ENCODE measurements at regions of chr9 and their contacts with region 1.

Region 1: GRCh38 chr9:34237836-34238235 is 59.0 kb downstream of the UBAP1 start:
- DNase-seq: no peak
- H3K4me3 ChIP-seq: no peak overlapping the region
- H3K4me3 Mint-ChIP-seq: no peak overlapping the region
- H3K27ac ChIP-seq: no peak overlapping the region
- H3K27ac Mint-ChIP-seq: no peak overlapping the region
- H3K4me1 ChIP-seq: no peaks in the 10 kb centered on the region
- H3K4me1 Mint-ChIP-seq: peaks cover 1% of the 10 kb centered on the region
- H3K27me3 ChIP-seq: no peaks in the 10 kb centered on the region
- H3K27me3 Mint-ChIP-seq: no peaks in the 10 kb centered on the region
- CTCF ChIP-seq: no peak

Region 2: GRCh38 chr9:34190996-34191892 is 46.6 kb before region 1 on chr9:
- intact Hi-C with region 1: no loop called
- DNase-seq: no peak
- H3K4me3 ChIP-seq: no peak overlapping the region
- H3K4me3 Mint-ChIP-seq: no peak overlapping the region
- H3K27ac ChIP-seq: peak overlapping the region in 1 of 2 donors; percentile 21
- H3K27ac Mint-ChIP-seq: peak overlapping the region in 5 of 7 donors; percentile 30 to 70 (median 57)
- H3K4me1 ChIP-seq: peaks cover 21 to 31% of the 10 kb centered on the region in 2 donors
- H3K4me1 Mint-ChIP-seq: peaks cover 35% of the 10 kb centered on the region
- H3K27me3 ChIP-seq: no peaks in the 10 kb centered on the region
- H3K27me3 Mint-ChIP-seq: no peaks in the 10 kb centered on the region
- CTCF ChIP-seq: no peak

Region 3: GRCh38 chr9:34203275-34203991 is 34.4 kb before region 1 on chr9:
- intact Hi-C with region 1: loop called in 1 of 2 experiments (anchors 5 kb)
- DNase-seq: no peak
- H3K4me3 ChIP-seq: no peak overlapping the region
- H3K4me3 Mint-ChIP-seq: no peak overlapping the region
- H3K27ac ChIP-seq: peak overlapping the region in 1 of 2 donors; percentile 31
- H3K27ac Mint-ChIP-seq: peak overlapping the region in 1 of 7 donors; percentile 4
- H3K4me1 ChIP-seq: no peaks in the 10 kb centered on the region
- H3K4me1 Mint-ChIP-seq: peaks cover 8% of the 10 kb centered on the region
- H3K27me3 ChIP-seq: no peaks in the 10 kb centered on the region
- H3K27me3 Mint-ChIP-seq: peaks cover 0 to 2% (median 0%) of the 10 kb centered on the region in 3 donors
- CTCF ChIP-seq: no peak

Region 4: DNA sequence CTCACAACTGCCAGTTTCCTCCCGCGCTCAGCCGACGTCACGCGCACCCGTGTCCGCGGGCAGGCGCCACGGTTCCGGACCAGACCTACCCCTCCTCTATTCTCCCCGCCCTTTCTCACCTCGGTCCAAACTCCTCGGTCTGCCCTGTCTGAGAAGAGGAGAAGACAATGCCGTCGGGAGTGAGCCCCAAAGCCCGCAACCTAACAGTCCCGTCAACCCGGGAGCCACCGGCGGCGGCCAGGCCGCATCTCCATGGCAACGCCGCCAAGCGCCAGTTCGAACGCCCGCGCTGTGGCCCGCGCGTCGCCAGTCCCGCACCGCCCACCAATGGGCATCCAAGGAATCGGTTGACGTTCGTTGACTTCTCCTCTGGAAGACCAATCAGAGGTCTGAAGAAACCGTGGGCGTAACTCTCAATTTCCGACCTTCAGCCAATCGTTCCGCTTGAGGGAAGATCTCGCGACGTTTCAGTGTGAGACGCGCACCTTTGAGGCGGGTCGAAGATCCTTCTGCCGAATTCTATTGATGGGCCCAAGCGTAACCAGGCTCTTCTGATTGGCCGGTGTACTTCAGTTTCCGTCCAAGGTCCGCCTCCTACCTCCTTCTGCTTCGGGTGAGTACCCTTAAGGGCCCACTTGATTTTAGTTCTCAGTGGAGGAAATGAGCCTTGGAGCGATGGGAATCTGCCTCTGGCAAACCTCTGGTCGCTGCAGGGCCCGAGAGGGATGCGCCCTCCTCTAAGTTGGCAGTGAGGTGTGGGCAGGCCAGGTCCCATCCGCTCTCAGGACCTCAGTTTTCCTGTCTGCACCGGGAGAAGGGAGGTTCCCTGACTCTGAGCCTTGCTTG is 91.4 kb after region 1 on chr9 and contains the starts of genes KIF24 and NUDT2:
- intact Hi-C with region 1: no loop called
- DNase-seq: peak; percentile 99 to 100 (median 100)
- H3K4me3 ChIP-seq: peak within 1 kb of the TSS; percentile 86 to 99 (median 98)
- H3K4me3 Mint-ChIP-seq: peak within 1 kb of the TSS; percentile 95 to 99
- H3K27ac ChIP-seq: peak within 1 kb of the TSS; percentile 91 to 95
- H3K27ac Mint-ChIP-seq: peak within 1 kb of the TSS; percentile 94 to 99 (median 97)
- H3K4me1 ChIP-seq: peaks cover 30 to 44% of the 10 kb centered on the region in 2 donors
- H3K4me1 Mint-ChIP-seq: peaks cover 40% of the 10 kb centered on the region
- H3K27me3 ChIP-seq: no peaks in the 10 kb centered on the region
- H3K27me3 Mint-ChIP-seq: peaks cover 0 to 2% (median 2%) of the 10 kb centered on the region in 3 donors
- CTCF ChIP-seq: no peak
- polyA plus RNA-seq, gene KIF24: 0.13 to 0.31 TPM in 2 of 3 donors, not detected in the other
- polyA plus RNA-seq, gene NUDT2: 24.4 to 56.9 (median 38.0) TPM